HEK293 (cell line): ENCODE measurements at regions of chr4 and their contacts with region 1.

Region 1: GRCh38 chr4:38179690-38180377 is 219.6 kb downstream of the PTTG2 start:
- H3K4me3 ChIP-seq: no peak overlapping the region
- H3K27ac ChIP-seq: no peak overlapping the region
- H3K4me1 ChIP-seq: no peaks in the 10 kb centered on the region
- CTCF ChIP-seq: peak; percentile 54

Region 2: GRCh38 chr4:38062088-38062893 is 117.5 kb before region 1 on chr4:
- CTCF ChIA-PET with region 1: interaction called, 10 read pairs
- POLR2A ChIA-PET with region 1: no interaction called
- H3K4me3 ChIP-seq: no peak overlapping the region
- H3K27ac ChIP-seq: no peak overlapping the region
- H3K4me1 ChIP-seq: no peaks in the 10 kb centered on the region
- CTCF ChIP-seq: peak; percentile 68; the same call in 1 of the 2 replicates

Region 3: DNA sequence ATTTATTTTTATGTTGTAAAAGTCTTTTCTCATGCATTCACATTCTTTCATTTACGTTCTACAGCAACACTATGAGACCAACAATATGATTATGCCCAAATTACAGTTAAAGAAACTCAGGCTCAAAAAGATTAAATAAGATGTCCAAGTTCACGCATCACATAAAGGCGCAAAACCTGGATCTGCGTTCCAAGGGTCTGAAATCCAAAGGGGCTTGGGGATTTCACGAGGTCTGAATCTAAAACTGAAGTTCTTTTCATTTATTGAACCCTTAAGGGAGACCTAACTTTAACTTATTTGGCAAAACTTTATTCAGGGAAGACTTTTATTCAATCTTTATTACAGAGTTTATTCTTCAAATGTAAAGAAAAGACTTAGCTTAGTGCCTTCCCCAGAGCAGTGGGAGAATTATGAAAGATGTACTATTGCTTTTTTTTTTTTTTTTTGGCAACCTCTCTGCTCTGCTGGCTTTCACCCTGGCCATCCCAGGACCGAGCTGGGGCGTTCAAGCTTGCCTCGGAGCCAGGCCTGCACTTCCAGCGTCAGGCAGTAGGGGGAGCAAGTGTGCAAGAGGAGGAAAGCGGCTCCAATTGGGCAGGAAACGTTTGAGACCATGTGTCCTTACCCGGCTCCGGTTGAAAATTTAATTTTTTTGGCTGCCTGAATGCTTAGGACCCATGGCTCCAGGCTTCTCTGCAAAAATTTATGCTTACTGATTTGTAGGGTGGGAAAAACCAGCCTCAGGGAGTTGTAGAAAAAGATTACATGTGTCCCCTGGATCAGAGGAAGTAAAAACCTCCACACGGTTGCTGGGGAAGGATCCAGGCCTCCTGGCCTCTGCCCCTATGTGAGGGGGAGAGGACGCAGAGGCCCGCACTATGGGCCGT is 139.9 kb after region 1 on chr4:
- CTCF ChIA-PET with region 1: interaction called, 26 read pairs
- POLR2A ChIA-PET with region 1: no interaction called
- H3K4me3 ChIP-seq: no peak overlapping the region
- H3K27ac ChIP-seq: peak overlapping the region; percentile 57; the same call in 1 of the 2 replicates
- H3K4me1 ChIP-seq: no peaks in the 10 kb centered on the region
- CTCF ChIP-seq: peak; percentile 77

Region 4: DNA sequence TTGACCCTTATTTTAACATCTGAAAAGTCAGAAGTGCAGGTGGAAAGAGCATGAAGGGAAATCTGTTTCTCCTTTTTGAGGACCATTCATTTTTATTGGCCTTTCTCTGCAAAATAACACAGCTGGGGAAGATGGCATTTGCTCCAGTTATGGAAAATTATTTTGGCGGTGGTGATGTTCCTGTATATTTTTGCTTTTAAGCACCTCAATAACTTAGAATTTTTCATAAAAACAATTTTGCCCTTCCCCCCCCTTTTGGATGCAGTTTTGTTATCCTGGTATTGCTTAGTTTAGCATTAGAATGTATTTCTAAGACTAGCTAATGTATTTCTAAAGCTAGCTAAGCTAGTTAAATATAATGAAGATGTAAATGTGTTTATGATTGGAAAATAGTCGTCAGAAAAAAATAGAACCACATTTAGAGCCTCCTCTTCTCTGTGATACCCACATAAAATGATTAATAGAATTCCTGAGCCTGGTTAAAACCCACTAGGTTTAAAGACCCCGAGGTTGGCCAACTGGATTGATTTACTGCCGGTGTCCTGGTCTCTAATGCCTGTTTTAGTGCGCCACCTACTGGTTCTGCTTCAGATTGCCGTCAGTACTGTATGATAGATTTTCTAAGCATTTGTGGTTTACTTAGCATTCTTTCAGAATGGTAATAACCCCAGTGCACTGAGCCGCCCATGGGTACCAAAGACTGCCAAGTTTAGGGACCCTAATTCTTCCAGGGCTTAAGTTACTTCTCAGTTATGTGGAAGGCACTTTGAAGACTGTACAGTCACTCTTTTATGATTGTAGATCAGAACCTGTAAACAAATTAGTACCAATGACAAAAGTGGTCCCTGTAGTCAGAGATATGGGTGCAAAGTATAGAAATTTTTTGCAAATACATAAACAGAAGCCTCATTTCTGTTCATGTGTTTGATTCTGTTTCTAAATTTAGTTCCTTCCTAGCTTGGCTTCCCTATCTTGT is 495.6 kb after region 1 on chr4:
- CTCF ChIA-PET with region 1: interaction called, 33 read pairs
- POLR2A ChIA-PET with region 1: no interaction called
- H3K4me3 ChIP-seq: no peak overlapping the region
- H3K27ac ChIP-seq: no peak overlapping the region
- H3K4me1 ChIP-seq: peaks cover 12% of the 10 kb centered on the region
- CTCF ChIP-seq: peak; percentile 40; the same call in 1 of the 2 replicates

Region 5: GRCh38 chr4:38730830-38731646 is 551.2 kb after region 1 on chr4:
- CTCF ChIA-PET with region 1: interaction called, 14 read pairs
- POLR2A ChIA-PET with region 1: no interaction called
- H3K4me3 ChIP-seq: no peak overlapping the region
- H3K27ac ChIP-seq: no peak overlapping the region
- H3K4me1 ChIP-seq: no peaks in the 10 kb centered on the region
- CTCF ChIP-seq: peak; percentile 55; the same call in 1 of the 2 replicates

Region 6: GRCh38 chr4:38782452-38783108 is 602.7 kb after region 1 on chr4 and contains the start of gene TLR10:
- CTCF ChIA-PET with region 1: interaction called, 10 read pairs
- POLR2A ChIA-PET with region 1: no interaction called
- H3K4me3 ChIP-seq: no peak within 1 kb of the TSS
- H3K27ac ChIP-seq: no peak within 1 kb of the TSS
- H3K4me1 ChIP-seq: no peaks in the 10 kb centered on the region
- CTCF ChIP-seq: no peak